ENCODE measurements at regions of chr5 and their contacts with region 1.

Region 1: DNA sequence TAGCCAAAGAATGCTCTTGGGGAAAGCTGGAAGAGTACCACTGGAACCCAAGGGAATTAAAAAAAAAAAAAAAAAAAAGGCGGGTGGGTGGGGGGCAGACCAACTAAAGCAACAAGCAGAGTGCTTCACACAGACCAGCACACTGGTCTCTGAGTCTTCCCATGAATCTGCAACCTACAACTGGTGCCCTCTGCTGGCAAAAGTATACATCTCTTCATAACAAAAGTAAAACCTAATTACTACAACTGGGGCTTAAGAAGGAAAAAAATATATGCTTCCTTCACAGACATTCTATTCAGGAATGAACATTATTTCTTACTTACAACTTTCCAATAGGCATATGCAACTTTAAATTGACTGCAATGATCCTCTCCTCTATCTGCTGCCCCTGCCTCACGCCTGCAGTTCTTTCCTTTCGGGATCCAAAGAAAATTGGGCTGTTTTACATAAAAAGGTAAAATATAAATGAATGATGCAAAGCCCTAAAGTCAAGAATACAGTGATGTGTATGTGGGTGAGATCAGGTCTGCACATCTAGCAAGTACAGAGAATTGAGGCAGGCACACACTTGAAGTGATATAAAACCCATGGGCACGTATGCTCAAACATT is 7.2 kb upstream of the KLHL3 start:
- DNase-seq: no peak
- H3K4me3 ChIP-seq: no peak overlapping the region
- H3K27ac ChIP-seq: no peak overlapping the region
- H3K4me1 ChIP-seq: peaks cover 0 to 17% (median under 1%) of the 10 kb centered on the region in 4 donors
- H3K27me3 ChIP-seq: no peaks in the 10 kb centered on the region
- CTCF ChIP-seq: peak; percentile 58 to 68 (median 60)
- EP300 ChIP-seq: no peak
- POLR2A ChIP-seq: no peak

Region 2: GRCh38 chr5:137629646-137630045 is 113.5 kb before region 1 on chr5:
- intact Hi-C with region 1: loop called (anchors 2 kb)
- DNase-seq: peak; percentile 80
- H3K4me3 ChIP-seq: peak overlapping the region in 1 of 4 donors; percentile 30
- H3K27ac ChIP-seq: peak overlapping the region in 1 of 4 donors; percentile 45
- H3K4me1 ChIP-seq: peaks cover 13 to 19% (median 16%) of the 10 kb centered on the region in 4 donors
- H3K27me3 ChIP-seq: no peaks in the 10 kb centered on the region
- CTCF ChIP-seq: peak; percentile 86 to 91 (median 88)
- EP300 ChIP-seq: no peak
- POLR2A ChIP-seq: no peak

Region 3: GRCh38 chr5:137660349-137660817 is 82.8 kb before region 1 on chr5:
- intact Hi-C with region 1: loop called (anchors 1 kb)
- DNase-seq: peak; percentile 92
- H3K4me3 ChIP-seq: no peak overlapping the region
- H3K27ac ChIP-seq: no peak overlapping the region
- H3K4me1 ChIP-seq: peaks cover 0 to under 1% (median 0%) of the 10 kb centered on the region in 4 donors
- H3K27me3 ChIP-seq: no peaks in the 10 kb centered on the region
- CTCF ChIP-seq: peak; percentile 50 to 74 (median 63)
- EP300 ChIP-seq: no peak
- POLR2A ChIP-seq: no peak

Measured in esophagus muscularis mucosa (tissue), 4 donors.